Stomach (tissue), 19 donors: ENCODE measurements at regions of chr1 and their contacts with region 1.

Region 1: GRCh38 chr1:214271174-214271858 is 9.6 kb upstream of the SMYD2 start:
- DNase-seq: no peak
- H3K4me3 ChIP-seq: no peak overlapping the region
- H3K27ac ChIP-seq: no peak overlapping the region
- H3K4me1 ChIP-seq: no peaks in the 10 kb centered on the region
- H3K27me3 ChIP-seq: peaks cover 0 to 57% (median 16%) of the 10 kb centered on the region in 3 donors
- CTCF ChIP-seq: no peak
- EP300 ChIP-seq: no peak
- POLR2A ChIP-seq: no peak

Region 2: DNA sequence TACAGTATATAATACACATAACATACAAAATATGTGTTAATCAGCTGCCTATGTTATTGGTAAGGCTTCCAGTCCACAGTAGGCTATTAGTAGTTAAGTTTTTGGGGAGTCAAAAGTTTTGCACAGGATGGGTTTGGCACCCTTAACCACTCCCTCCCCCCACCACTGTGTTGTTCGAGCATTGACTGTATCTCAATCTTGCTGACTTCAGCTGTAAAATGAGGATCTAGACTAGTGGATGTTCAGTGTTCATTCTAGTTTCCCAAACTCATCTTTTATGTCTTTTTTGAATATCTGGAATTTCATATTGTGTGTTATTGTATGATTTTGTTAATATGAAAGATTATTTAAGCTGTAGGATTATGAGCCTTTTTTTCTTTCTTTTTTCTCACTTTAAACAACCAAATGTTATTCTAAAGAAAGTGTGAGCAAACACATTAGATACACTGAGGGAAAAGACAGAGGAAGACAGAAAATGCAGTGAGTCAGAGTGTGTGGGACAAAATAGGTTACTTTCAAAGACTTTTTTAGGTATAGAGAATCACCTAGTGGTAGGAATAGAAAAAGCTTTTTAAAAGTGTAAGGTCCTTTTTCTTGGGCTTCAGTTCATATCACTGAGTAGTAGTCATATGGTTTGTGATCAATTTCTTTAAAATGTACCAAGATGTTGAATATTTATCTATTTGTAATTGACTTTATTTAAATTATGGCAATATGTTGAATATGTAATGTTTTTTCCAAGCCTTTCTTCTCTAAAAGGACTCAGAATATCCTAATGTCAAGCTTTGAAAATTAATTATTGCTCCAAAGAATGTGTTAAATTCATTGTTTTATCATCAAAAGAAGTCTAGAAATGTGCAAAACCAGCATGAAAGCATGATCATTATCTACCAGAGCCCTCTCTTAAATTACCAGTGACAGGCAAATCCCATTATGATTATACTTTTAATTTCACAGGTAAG is 313.8 kb after region 1 on chr1:
- intact Hi-C with region 1: loop called (anchors 10 kb)
- DNase-seq: peak in 1 of 2 donors; percentile 52
- H3K4me3 ChIP-seq: no peak overlapping the region
- H3K27ac ChIP-seq: no peak overlapping the region
- H3K4me1 ChIP-seq: peaks cover 0 to 9% (median 0%) of the 10 kb centered on the region in 4 donors
- H3K27me3 ChIP-seq: no peaks in the 10 kb centered on the region
- CTCF ChIP-seq: peak in 5 of 7 experiments; percentile 48 to 81 (median 63)
- EP300 ChIP-seq: no peak
- POLR2A ChIP-seq: no peak